ENCODE measurements at regions of chr4 and their contacts with region 1.

Region 1: DNA sequence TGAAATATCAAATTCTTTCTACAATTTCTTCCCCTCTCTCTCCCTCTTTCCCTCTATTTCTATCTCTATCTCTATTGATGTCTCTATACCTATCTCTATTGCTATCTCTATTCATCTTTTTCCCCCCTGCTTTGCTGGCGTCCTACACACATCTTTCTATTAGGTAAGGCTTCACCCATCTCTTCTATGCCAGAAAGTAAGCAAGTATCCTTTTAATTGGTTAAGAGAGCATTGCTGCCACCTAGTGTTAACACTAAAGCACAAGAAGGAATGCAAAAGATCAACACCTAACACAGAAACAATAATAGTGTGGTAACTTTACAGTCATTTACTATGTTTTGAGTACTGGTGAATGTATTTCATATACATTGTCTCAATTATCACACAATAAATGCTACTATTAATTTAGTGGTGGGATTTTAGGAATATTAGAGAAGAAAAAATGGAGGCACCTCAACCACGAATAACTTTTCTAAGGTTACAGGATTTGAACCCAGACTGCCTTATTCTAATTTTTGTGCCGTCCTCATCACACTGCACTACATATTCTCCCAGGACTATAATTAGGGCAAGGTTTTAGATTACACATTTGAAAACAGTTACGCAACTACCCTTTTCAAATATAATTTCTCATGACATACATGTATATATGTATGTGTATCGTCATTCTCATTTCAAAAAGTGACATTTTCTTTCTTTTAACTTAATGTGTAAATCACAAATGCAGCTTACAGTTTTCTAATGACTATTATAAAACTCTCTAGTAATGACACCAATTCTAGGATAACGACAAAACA is 3.7 kb upstream of the C4orf36 start:
- DNase-seq: peak; percentile 58
- H3K4me3 ChIP-seq: no peak overlapping the region
- H3K27ac ChIP-seq: no peak overlapping the region
- H3K4me1 ChIP-seq: no peaks in the 10 kb centered on the region
- H3K27me3 ChIP-seq: no peaks in the 10 kb centered on the region
- CTCF ChIP-seq: peak; percentile 57 to 88 (median 82)
- POLR2A ChIP-seq: no peak

Region 2: GRCh38 chr4:86497980-86498862 is 397.7 kb before region 1 on chr4:
- intact Hi-C with region 1: loop called (anchors 1 kb)
- DNase-seq: peak; percentile 15
- H3K4me3 ChIP-seq: no peak overlapping the region
- H3K27ac ChIP-seq: no peak overlapping the region
- H3K4me1 ChIP-seq: peaks cover 3% of the 10 kb centered on the region
- H3K27me3 ChIP-seq: no peaks in the 10 kb centered on the region
- CTCF ChIP-seq: peak; percentile 38 to 80 (median 72)
- POLR2A ChIP-seq: no peak

Region 3: DNA sequence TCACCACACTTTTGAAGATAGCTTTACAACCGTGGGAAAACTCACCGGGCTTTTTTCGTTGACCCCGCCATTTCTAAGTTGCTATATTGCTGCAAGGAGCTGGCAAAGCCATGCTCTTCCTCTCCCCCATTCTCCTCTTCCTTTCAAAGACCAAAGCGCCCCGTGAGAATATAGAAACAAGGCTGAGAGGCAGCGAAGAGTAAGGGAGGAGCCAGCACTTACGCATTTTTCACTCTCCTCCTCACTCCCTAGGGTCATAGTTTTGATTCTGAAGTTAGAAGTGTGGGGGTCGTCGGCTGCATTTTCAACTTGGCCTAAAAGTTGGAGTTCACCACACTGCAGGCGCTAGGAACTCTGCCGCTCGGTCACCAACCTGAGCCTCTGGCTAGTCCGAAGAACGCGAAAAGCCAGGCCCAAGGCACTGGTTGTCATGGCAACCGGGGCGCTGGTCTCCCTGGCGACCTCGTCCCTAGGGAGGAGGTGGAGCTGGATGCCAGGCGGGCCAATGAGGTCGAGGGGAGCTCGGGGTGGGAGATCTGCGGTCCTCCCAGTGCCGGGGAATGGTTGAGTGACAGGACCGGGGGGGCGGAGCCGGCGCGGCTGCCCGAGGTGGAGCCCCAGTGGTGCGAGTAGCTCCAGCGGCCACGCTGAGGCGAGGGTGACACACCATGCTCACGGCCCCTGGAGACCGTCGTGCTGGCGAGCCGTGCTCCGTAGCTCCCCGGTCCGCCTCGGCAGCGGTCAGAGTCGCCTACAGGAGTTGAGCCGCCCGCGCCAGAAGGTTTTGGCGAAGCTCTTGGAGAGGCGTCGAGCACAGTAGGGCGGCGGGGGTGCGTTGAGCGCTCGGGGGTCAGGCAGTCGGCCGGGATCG is 302.0 kb before region 1 on chr4 and contains the start of gene PTPN13:
- intact Hi-C with region 1: loop called (anchors 2 kb)
- DNase-seq: peak; percentile 99
- H3K4me3 ChIP-seq: peak within 1 kb of the TSS; percentile 75 to 78
- H3K27ac ChIP-seq: peak within 1 kb of the TSS; percentile 85 to 86
- H3K4me1 ChIP-seq: no peaks in the 10 kb centered on the region
- H3K27me3 ChIP-seq: no peaks in the 10 kb centered on the region
- CTCF ChIP-seq: peak in 2 of 4 experiments; percentile 11 to 36
- POLR2A ChIP-seq: peak; percentile 96
- total RNA-seq, gene PTPN13: 24.6 to 61.2 TPM

Region 4: DNA sequence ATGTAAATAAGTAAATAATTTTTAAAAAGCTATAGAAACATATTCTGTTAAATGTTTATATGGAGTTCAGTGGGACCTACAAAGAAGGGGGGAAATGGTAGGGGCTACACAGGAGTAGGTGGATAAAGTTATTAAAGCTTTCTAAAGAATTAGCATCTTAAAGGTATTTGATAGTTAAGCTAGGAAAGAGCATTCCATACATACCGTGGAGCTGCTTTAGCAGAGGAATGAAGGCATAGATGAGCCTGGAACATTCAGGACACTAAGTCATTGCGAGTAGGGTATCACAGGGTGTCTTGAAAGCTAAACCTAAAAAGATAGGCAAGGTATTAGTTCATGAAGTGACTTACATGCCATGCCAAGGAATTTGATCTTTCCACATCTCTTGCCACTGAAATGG is 107.1 kb before region 1 on chr4:
- intact Hi-C with region 1: loop called (anchors 10 kb)
- DNase-seq: no peak
- H3K4me3 ChIP-seq: no peak overlapping the region
- H3K27ac ChIP-seq: no peak overlapping the region
- H3K4me1 ChIP-seq: no peaks in the 10 kb centered on the region
- H3K27me3 ChIP-seq: no peaks in the 10 kb centered on the region
- CTCF ChIP-seq: no peak
- POLR2A ChIP-seq: no peak

Measured in prostate gland (tissue), 2 donors.